ENCODE measurements at regions of chr1 and their contacts with region 1.

Region 1: DNA sequence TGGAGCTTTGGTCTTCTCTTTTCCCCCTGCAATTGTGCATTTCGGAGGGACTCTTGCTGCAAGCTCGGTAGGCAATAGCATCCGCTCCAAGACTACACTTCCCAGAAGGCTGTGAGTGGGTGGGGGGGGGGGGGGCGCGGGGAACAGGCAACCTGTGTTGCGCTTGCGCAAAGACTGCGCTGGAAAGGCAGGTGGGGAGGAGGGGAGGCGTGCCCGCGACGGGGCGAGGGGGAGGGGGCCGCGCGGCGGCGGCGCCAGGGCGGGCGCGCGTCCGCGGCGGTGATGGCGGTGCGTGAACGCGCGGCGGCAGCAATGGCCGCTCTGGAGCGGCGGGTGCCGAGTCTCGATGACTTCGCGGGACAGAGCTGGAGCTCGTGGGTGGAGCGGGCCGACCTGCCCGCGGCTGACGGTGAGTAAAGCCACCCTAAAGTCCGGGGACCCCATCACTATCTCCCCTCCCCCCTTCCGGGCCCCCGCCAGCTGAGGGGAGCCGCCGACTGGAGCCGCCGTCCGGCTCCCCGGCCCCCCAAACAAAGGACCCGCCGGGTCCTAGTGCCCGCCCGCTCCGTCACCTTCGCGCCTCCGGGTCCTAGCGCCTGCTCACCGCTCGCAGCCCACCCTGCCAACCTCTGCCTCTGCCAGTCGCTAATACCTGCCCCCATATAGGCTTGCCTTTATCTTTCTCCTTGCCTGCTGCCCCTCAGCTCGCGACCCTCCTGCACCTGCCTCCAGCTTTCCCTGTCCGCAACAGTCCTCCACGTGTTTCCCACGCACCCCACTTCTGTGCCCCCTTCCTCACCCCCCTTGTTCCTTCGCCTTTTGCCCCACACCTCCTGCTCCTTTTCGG is at the start of gene ATXN7L2:
- DNase-seq: peak; percentile 93 to 96 (median 94)
- ATAC-seq: peak; percentile 70 to 95 (median 90)
- H3K4me3 ChIP-seq: peak within 1 kb of the TSS; percentile 55 to 92 (median 80)
- H3K27ac ChIP-seq: peak within 1 kb of the TSS; percentile 87 to 100 (median 98)
- H3K4me1 ChIP-seq: peaks cover 0 to 23% (median 14%) of the 10 kb centered on the region in 12 donors
- H3K27me3 ChIP-seq: peaks cover 0 to 2% (median 0%) of the 10 kb centered on the region in 9 donors
- CTCF ChIP-seq: no peak
- POLR2A ChIP-seq: peak in 1 of 2 donors; percentile 46
- total RNA-seq, gene ATXN7L2: 1.2 to 2.8 (median 2.1) TPM

Region 2: DNA sequence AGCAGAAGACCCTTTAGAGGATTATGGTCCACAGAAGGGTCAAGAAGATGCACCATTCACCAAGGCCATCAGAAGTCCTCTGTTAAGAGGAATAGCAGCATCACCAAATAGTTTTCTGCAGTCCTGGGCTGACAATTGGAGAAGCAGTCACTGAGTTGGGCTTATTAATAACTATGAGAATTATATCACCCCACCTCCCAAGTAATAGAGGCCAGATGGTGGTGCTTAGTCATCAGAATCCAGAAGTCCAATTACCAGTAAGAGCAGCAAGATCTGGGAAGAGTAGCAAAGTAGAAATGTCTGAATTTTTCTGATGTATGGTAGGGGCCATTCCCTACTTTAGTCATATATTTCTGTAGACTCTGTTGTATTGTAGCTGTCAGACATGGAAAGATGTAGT is 51.6 kb before region 1 on chr1:
- intact Hi-C with region 1: loop called in 7 of 10 experiments (anchors 5 kb)
- DNase-seq: no peak
- ATAC-seq: no peak
- H3K4me3 ChIP-seq: no peak overlapping the region
- H3K27ac ChIP-seq: no peak overlapping the region
- H3K4me1 ChIP-seq: peaks cover 0 to 10% (median 5%) of the 10 kb centered on the region in 12 donors
- H3K27me3 ChIP-seq: no peaks in the 10 kb centered on the region
- CTCF ChIP-seq: no peak
- POLR2A ChIP-seq: no peak

Region 3: GRCh38 chr1:109579491-109579890 is 95.6 kb after region 1 on chr1:
- intact Hi-C with region 1: no loop called
- DNase-seq: peak in 1 of 5 donors; percentile 14
- ATAC-seq: peak; percentile 37 to 84 (median 78)
- H3K4me3 ChIP-seq: no peak overlapping the region
- H3K27ac ChIP-seq: no peak overlapping the region
- H3K4me1 ChIP-seq: peaks cover 0 to 22% (median 10%) of the 10 kb centered on the region in 12 donors
- H3K27me3 ChIP-seq: no peaks in the 10 kb centered on the region
- CTCF ChIP-seq: no peak
- POLR2A ChIP-seq: no peak

Measured in heart left ventricle (tissue), 16 donors.